Activated T-helper 1 cell treated with anti-CD3 and anti-CD28 coated beads, Interleukin-12 subunit alpha, Interleukin-12 subunit beta, Interleukin-2, Interleukin-4 antibody, amounts not matched to agents 30 ng/mL and 10 ng/mL and 1 ng/mL, durations not matched to agents 14 hours and 24 hours and 36 hours (primary cell): ENCODE measurements at regions of chr11 and their contacts with region 1.

Region 1: GRCh38 chr11:85752890-85753581 is 57.9 kb downstream of the SYTL2 start:
- DNase-seq: peak; percentile 89
- H3K4me3 Mint-ChIP-seq: peak overlapping the region; percentile 73
- H3K27ac Mint-ChIP-seq: peak overlapping the region; percentile 98
- H3K4me1 Mint-ChIP-seq: peaks cover 99% of the 10 kb centered on the region
- H3K27me3 Mint-ChIP-seq: peaks cover 4% of the 10 kb centered on the region

Region 2: DNA sequence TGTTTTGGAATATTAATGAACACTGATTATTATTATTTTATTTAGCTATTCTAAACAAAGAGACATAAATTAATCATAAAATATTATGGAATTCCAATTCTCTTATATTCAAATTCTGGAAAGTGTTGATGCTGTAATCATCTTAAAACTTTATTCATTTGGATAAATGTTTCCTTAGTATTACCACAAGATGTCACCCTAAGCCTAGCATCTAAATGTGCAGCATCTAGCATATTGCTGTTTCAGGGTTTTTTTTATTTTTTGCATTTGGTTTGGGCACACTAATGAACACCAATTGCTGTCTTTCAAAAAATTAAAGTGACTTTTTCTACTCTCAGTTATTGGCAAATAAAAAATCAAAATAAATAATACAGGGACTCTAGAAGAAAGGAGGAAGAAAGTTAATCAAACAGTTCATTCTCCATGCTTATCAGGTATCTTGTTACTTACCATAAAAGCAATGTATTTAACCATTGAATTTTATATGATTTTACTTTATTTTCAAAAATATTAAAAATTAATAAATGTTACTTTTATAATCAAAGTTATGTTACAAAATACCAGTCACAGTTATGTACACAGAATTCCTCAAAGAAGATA is 157.7 kb before region 1 on chr11:
- intact Hi-C with region 1: no loop called
- DNase-seq: no peak
- H3K4me3 Mint-ChIP-seq: no peak overlapping the region
- H3K27ac Mint-ChIP-seq: no peak overlapping the region
- H3K4me1 Mint-ChIP-seq: no peaks in the 10 kb centered on the region
- H3K27me3 Mint-ChIP-seq: peaks cover 6% of the 10 kb centered on the region

Region 3: DNA sequence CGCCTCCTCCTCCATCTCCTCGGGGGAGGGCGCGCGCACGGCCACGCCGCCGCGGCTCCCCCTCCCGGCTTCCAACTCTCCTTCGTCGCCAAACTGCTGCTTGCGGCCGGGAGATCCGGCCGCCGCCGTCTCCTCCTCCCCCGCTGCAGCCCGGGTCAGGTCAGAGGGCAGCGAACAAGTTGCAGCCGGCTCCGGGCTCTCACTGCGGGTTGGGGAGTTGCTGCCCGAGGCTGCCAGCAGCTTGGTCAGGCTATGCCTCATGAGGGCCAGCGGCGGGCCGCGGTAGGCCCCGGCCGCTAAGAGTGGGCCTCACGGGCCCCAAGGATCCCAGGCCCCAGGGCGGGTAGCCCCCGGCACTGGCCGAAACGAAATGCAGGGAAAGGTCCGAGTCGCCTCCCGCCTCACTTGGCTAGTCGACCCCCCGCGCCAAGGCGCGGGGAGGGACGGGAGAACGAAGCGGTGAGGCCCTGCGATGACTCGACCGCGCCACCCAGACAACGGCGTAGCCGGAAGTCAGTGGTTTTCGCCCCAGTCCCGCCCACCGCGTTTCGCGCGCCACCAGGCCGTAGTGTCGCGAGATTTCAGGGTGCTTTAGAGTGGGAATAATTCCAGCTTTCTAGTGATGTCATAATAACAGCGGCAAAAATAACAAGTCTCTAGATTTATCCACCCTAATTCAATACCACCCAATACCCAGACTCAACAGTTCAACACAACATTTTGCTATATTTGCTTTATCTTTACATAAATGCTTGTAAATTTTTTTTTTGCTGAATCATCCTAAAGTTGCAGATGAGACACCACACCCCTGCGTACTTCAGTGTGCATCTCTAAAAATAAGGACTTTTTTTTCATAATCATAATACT is 88.2 kb before region 1 on chr11 and contains the start of gene CREBZF:
- intact Hi-C with region 1: loop called (anchors 1 kb)
- DNase-seq: peak; percentile 94
- H3K4me3 Mint-ChIP-seq: peak within 1 kb of the TSS; percentile 99
- H3K27ac Mint-ChIP-seq: peak within 1 kb of the TSS; percentile 97
- H3K4me1 Mint-ChIP-seq: peaks cover 51% of the 10 kb centered on the region
- H3K27me3 Mint-ChIP-seq: no peaks in the 10 kb centered on the region
- total RNA-seq, gene CREBZF: 52.0 and 55.9 TPM in 2 replicates

Region 4: GRCh38 chr11:85699957-85700741 is 52.9 kb before region 1 on chr11:
- intact Hi-C with region 1: loop called (anchors 1 kb)
- DNase-seq: no peak
- H3K4me3 Mint-ChIP-seq: peak overlapping the region; percentile 45
- H3K27ac Mint-ChIP-seq: peak overlapping the region; percentile 78
- H3K4me1 Mint-ChIP-seq: peaks cover 49% of the 10 kb centered on the region
- H3K27me3 Mint-ChIP-seq: no peaks in the 10 kb centered on the region

Region 5: GRCh38 chr11:85779956-85780640 is 27.1 kb after region 1 on chr11:
- intact Hi-C with region 1: loop called (anchors 1 kb)
- DNase-seq: no peak
- H3K4me3 Mint-ChIP-seq: no peak overlapping the region
- H3K27ac Mint-ChIP-seq: no peak overlapping the region
- H3K4me1 Mint-ChIP-seq: peaks cover 61% of the 10 kb centered on the region
- H3K27me3 Mint-ChIP-seq: no peaks in the 10 kb centered on the region

Region 6: DNA sequence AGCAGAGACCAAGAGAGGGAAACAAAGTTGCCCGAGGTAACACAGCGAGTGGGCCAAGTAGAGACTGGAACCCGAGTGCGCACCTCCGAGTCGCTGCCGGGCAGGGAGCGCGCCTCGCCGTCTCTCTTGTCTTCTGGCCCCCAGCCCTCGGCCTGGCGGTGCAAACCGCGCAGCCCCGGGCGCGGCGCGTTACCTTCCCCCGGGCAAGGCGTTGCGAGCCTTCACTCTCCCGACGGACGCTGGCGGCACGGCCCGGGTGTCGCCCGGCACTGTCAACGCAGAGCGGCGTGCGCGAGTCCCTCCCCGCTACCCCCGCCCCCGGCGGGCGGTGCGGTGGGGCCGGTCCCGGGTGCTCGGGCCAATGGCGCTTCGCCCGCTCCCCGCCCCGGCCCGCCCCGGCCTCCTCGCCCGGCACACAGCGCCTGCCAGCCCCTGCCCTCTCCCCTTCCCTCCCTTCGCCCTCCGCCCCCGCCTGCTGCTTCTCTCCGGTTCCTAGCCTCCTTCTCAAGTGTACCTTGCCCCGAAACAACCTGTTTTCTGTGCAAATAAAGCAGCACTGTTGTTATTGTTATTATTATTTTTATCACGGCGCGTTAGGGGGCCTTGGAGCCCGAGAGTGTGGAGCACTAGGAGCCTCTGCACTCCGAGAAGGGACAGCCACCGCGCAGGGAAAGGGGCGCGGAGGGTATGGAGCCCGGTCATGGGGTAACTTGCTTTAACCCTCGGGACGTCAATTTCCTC is 58.0 kb after region 1 on chr11 and contains the start of gene SYTL2:
- intact Hi-C with region 1: loop called (anchors 1 kb)
- DNase-seq: peak; percentile 83
- H3K4me3 Mint-ChIP-seq: peak within 1 kb of the TSS; percentile 94
- H3K27ac Mint-ChIP-seq: peak within 1 kb of the TSS; percentile 85
- H3K4me1 Mint-ChIP-seq: peaks cover 52% of the 10 kb centered on the region
- H3K27me3 Mint-ChIP-seq: no peaks in the 10 kb centered on the region
- total RNA-seq, gene SYTL2: 37.1 and 38.7 TPM in 2 replicates

Region 7: GRCh38 chr11:86116386-86116726 is 363.3 kb after region 1 on chr11:
- intact Hi-C with region 1: loop called (anchors 5 kb)
- DNase-seq: no peak
- H3K4me3 Mint-ChIP-seq: peak overlapping the region; percentile 9
- H3K27ac Mint-ChIP-seq: peak overlapping the region; percentile 70
- H3K4me1 Mint-ChIP-seq: peaks cover 30% of the 10 kb centered on the region
- H3K27me3 Mint-ChIP-seq: no peaks in the 10 kb centered on the region